Dendritic cell treated with granulocyte-macrophage colony-stimulating factor and Interleukin-4, amounts not matched to agents 40 ng/mL and 50 ng/mL, for 4 days (primary cell): ENCODE measurements at regions of chrX and their contacts with region 1.

Region 1: DNA sequence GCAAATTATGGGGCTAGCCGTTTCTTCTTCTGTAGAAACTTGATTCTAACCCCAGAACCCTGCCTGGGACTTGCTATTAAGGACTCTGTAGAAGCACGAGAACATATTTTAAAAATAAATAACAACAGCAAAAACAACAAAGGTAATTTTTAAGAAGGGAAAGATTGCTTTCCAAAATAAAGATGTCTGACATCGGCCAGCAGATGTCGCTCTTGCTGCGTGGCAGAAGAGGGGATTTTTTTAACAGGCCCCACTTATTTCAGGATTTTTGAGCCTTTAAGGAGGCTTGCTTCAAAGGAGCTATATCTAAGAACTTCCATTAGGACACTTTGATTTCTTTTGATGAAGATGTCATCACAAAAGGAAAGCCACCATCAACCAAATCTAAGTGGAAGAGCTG is 62.8 kb upstream of the EGFL6 start:
- H3K4me3 Mint-ChIP-seq: no peak overlapping the region
- H3K27ac Mint-ChIP-seq: no peak overlapping the region
- H3K4me1 Mint-ChIP-seq: peaks cover 11% of the 10 kb centered on the region
- H3K27me3 Mint-ChIP-seq: no peaks in the 10 kb centered on the region

Region 2: GRCh38 chrX:13489454-13489853 is 17.1 kb before region 1 on chrX:
- intact Hi-C with region 1: no loop called
- H3K4me3 Mint-ChIP-seq: no peak overlapping the region
- H3K27ac Mint-ChIP-seq: no peak overlapping the region
- H3K4me1 Mint-ChIP-seq: peaks cover 33% of the 10 kb centered on the region
- H3K27me3 Mint-ChIP-seq: no peaks in the 10 kb centered on the region

Region 3: DNA sequence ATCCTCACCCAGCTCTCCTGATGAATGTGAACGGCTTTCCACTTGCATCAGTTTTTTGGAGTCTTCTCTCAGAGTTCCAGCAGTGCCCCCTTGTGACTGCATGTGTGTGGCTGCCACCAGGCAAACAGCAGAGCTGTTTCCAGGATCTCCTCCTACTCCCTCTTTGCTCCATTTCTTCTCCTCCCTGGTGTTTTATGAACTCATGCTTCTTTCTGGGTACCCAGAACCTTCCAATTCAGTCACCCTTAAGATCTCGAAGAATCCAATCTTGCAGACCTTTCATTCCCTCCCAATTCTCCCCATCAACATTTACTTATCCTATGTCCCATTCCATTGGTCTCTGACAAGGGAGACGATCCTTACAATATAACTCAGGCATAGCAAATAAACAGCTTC is 139.6 kb after region 1 on chrX:
- intact Hi-C with region 1: loop called (anchors 2 kb)
- H3K4me3 Mint-ChIP-seq: no peak overlapping the region
- H3K27ac Mint-ChIP-seq: no peak overlapping the region
- H3K4me1 Mint-ChIP-seq: peaks cover 6% of the 10 kb centered on the region
- H3K27me3 Mint-ChIP-seq: no peaks in the 10 kb centered on the region

Region 4: GRCh38 chrX:13750204-13750603 is 243.6 kb after region 1 on chrX:
- intact Hi-C with region 1: loop called (anchors 5 kb)
- H3K4me3 Mint-ChIP-seq: no peak overlapping the region
- H3K27ac Mint-ChIP-seq: no peak overlapping the region
- H3K4me1 Mint-ChIP-seq: peaks cover 25% of the 10 kb centered on the region
- H3K27me3 Mint-ChIP-seq: no peaks in the 10 kb centered on the region

Region 5: DNA sequence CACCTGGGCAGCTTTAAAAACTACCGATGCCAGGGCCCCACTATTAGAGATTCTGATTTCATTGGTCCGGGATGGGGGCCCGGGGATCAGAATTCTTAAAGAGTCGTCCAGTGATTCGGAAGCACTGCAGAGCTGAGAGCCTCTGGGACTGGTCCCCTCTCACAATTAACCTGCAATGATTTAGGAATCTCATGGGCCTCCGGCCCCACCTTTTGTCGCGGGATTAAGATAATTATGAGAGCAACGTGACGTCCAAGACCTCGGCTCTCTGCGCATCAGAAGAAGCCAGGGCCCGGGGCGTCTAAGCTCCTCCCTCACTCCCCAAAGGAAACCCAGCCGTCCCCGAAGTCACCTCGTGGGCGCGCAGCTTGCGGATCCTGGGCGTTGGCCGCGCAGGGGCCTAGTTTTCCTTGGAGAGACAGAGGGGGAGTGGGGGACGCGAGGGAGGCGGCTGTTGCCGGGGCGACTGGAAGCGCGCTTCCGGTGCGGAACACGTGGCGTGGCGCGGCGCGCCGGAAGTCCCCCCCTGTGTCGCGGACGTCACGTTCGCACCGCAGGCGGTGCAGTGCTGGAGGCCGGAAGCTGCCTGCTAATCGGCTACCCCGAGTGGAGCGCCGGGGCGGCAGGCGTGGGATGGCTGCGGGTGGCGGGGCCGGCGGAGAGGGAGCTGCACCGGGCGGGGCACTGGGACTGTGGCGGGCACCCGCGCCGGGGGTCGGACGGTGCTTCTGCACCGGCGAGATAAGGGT is 523.0 kb after region 1 on chrX and contains the start of gene GEMIN8:
- intact Hi-C with region 1: loop called (anchors 1 kb)
- H3K4me3 Mint-ChIP-seq: peak within 1 kb of the TSS; percentile 92
- H3K27ac Mint-ChIP-seq: peak within 1 kb of the TSS; percentile 98
- H3K4me1 Mint-ChIP-seq: peaks cover 18% of the 10 kb centered on the region
- H3K27me3 Mint-ChIP-seq: no peaks in the 10 kb centered on the region